Naive thymus-derived CD4-positive, alpha-beta T cell (primary cell): ENCODE measurements at regions of chr14 and their contacts with region 1.

Region 1: DNA sequence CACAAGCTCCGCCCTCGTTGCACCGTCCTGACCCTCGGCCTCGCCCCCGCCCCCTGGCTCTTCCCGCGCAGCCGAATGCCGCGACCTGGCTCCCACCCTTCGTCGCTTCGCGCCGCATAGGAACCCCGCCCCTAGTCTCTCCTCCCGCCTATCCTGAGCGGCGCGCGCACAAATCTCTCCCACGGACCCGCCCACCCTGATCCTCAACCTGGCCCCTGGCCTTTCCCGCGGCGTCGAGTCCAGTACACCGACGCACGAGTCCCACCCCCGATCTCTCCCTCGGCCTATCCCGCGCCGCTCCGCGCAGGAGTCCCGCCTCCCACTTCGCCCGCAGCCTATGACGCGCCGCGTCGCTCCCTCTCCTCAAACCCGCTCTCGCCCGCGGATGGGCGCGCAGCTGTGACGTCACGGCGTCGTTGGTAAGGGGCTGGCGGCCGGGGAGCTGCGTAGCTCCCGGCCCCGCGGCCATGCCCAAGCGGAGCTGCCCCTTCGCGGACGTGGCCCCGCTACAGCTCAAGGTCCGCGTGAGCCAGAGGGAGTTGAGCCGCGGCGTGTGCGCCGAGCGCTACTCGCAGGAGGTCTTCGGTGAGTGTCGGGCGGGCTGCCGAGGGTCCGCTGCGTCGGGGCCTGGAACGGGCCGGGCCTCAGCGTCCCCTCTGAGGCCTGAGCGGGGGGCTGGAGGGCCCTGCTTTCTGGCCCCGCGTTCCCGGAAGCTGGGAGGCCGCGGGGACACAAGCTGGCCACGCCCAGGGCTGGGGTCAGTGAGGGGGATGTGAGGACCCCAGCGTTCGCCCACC is at the start of gene SIVA1:
- DNase-seq: peak; percentile 98 to 100 (median 99)
- ATAC-seq: peak; percentile 94
- H3K4me3 ChIP-seq: peak within 1 kb of the TSS; percentile 95
- H3K4me3 Mint-ChIP-seq: peak within 1 kb of the TSS; percentile 88 to 97 (median 92)
- H3K27ac ChIP-seq: peak within 1 kb of the TSS; percentile 95
- H3K27ac Mint-ChIP-seq: peak within 1 kb of the TSS; percentile 78 to 94 (median 92)
- H3K4me1 ChIP-seq: peaks cover 14 to 29% of the 10 kb centered on the region in 2 donors
- H3K4me1 Mint-ChIP-seq: peaks cover 19 to 45% (median 36%) of the 10 kb centered on the region in 7 donors
- H3K27me3 ChIP-seq: no peaks in the 10 kb centered on the region
- H3K27me3 Mint-ChIP-seq: no peaks in the 10 kb centered on the region
- total RNA-seq, gene SIVA1: 61.4 to 97.7 (median 77.4) TPM

Region 2: DNA sequence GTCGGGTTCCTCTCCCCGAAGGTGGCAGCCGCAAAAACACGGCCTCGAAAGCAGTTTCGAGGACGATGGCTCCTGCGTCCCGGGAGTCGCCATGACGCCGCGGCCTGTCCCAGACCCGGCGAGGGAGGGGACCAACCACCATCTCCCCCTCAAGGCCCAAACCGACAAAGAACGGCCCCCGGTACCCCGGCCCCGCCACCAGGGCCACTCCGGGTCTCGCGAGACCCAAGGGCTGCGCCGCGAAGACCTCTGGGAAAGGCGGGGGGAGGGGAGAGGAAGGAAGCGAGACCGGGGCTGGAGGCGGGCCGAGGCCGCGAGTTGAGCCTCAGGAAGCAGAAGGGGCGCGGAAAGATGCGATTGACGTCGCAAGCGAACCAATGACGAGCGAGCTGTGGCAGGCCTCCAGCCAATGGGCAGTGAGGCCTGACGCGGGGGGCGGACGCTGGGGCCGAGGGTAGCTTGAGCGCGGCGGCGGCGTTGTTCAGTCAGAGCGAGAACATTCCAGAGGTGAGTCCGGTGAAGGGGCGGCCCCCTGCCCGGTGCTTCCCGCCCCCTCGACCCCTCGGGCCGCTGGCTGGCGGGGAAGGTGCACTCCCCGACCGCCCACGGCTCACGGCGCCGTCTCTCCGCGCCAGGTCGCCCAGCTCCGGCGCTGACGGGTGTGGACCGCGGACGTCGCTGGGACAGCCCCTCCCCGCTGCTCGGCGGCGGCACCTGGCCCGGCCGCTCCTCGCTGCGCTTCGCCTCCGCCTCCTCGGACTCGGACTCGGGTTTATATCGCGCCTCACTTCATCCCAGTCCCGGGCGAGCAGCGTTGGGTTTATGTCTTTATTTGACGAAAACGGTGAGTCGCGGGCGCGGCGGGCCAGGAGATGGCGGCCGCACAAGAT is 1418.9 kb before region 1 on chr14 and contains the start of gene EIF5:
- CTCF ChIA-PET with region 1: no interaction called
- POLR2A ChIA-PET with region 1: no interaction called
- intact Hi-C with region 1: loop called in 1 of 2 experiments (anchors 2 kb)
- DNase-seq: peak; percentile 92 to 99 (median 99)
- ATAC-seq: peak; percentile 91
- H3K4me3 ChIP-seq: peak within 1 kb of the TSS; percentile 81
- H3K4me3 Mint-ChIP-seq: peak within 1 kb of the TSS; percentile 92 to 97 (median 96)
- H3K27ac ChIP-seq: peak within 1 kb of the TSS; percentile 99
- H3K27ac Mint-ChIP-seq: peak within 1 kb of the TSS; percentile 94 to 99 (median 98)
- H3K4me1 ChIP-seq: peaks cover 22 to 29% of the 10 kb centered on the region in 2 donors
- H3K4me1 Mint-ChIP-seq: peaks cover 23 to 61% (median 50%) of the 10 kb centered on the region in 7 donors
- H3K27me3 ChIP-seq: no peaks in the 10 kb centered on the region
- H3K27me3 Mint-ChIP-seq: peaks cover 0 to 4% (median 0%) of the 10 kb centered on the region in 5 donors
- total RNA-seq, gene EIF5: 182 to 716 (median 322) TPM

Region 3: GRCh38 chr14:103724116-103724515 is 1028.8 kb before region 1 on chr14:
- CTCF ChIA-PET with region 1: no interaction called
- POLR2A ChIA-PET with region 1: no interaction called
- intact Hi-C with region 1: no loop called
- DNase-seq: no peak
- ATAC-seq: no peak
- H3K4me3 ChIP-seq: no peak overlapping the region
- H3K4me3 Mint-ChIP-seq: no peak overlapping the region
- H3K27ac ChIP-seq: no peak overlapping the region
- H3K27ac Mint-ChIP-seq: no peak overlapping the region
- H3K4me1 ChIP-seq: peaks cover 0 to 4% of the 10 kb centered on the region in 2 donors
- H3K4me1 Mint-ChIP-seq: peaks cover 10 to 22% (median 15%) of the 10 kb centered on the region in 7 donors
- H3K27me3 ChIP-seq: no peaks in the 10 kb centered on the region
- H3K27me3 Mint-ChIP-seq: no peaks in the 10 kb centered on the region

Region 4: GRCh38 chr14:104689109-104689880 is 63.6 kb before region 1 on chr14 and contains the start of gene INF2:
- CTCF ChIA-PET with region 1: no interaction called
- POLR2A ChIA-PET with region 1: interaction called, 4 read pairs
- intact Hi-C with region 1: loop called in 1 of 2 experiments (anchors 2 kb)
- DNase-seq: peak in 6 of 9 donors; percentile 36 to 64 (median 40)
- ATAC-seq: peak; percentile 79
- H3K4me3 ChIP-seq: peak within 1 kb of the TSS; percentile 70
- H3K4me3 Mint-ChIP-seq: peak within 1 kb of the TSS; percentile 58 to 91 (median 79)
- H3K27ac ChIP-seq: peak within 1 kb of the TSS; percentile 77
- H3K27ac Mint-ChIP-seq: peak within 1 kb of the TSS in 5 of 9 donors; percentile 8 to 90 (median 65)
- H3K4me1 ChIP-seq: peaks cover 10 to 62% of the 10 kb centered on the region in 2 donors
- H3K4me1 Mint-ChIP-seq: peaks cover 14 to 64% (median 48%) of the 10 kb centered on the region in 7 donors
- H3K27me3 ChIP-seq: no peaks in the 10 kb centered on the region
- H3K27me3 Mint-ChIP-seq: no peaks in the 10 kb centered on the region
- total RNA-seq, gene INF2: 65.0 to 140 (median 95.5) TPM

Region 5: DNA sequence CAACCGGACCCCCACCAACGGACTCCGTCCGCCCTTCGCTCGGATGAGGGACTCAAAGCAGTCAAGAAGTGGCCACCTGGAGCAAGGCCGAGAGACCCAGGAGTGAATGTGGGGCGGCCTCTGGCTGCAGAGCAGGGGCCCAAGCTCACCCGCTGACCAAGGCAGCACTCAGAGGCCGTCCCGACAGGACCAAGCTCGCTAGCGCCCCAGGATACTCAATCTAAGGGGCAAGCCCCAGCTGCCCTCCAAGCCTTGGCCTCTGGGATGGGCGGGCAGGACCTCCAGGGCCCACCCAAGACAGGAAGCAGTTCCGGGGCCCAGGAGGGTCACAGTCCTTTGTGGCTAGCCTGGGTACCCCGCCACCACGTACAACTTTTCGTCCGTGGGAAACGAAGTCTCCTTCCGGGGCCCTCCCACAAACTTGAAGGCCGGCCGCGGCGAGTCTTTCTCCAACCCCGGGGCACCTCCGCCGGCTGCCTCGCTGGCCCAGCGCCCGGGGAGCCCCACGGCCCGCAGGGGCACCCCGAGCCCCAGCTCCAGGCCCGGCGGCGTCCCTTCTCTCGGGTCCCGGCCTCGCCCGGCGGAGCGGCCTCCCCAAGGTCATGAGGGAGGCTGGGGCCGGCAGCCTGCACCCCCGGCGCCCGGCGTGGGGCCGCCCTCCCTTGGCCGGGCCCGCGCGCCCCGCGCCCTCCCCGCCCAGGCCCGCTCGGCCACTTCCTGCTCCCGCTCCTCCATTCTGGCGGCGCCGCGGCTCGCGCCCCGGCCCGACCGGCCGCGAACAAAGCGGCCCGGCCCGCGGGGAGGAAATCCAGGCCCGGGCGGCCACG is 41.9 kb after region 1 on chr14:
- CTCF ChIA-PET with region 1: no interaction called
- POLR2A ChIA-PET with region 1: interaction called, 11 read pairs
- intact Hi-C with region 1: loop called (anchors 1 kb)
- DNase-seq: peak in 1 of 9 donors; percentile 64
- ATAC-seq: peak; percentile 56
- H3K4me3 ChIP-seq: peak overlapping the region; percentile 62
- H3K4me3 Mint-ChIP-seq: peak overlapping the region; percentile 86 to 92 (median 90)
- H3K27ac ChIP-seq: peak overlapping the region; percentile 68
- H3K27ac Mint-ChIP-seq: peak overlapping the region; percentile 73 to 90 (median 78)
- H3K4me1 ChIP-seq: peaks cover 21 to 34% of the 10 kb centered on the region in 2 donors
- H3K4me1 Mint-ChIP-seq: peaks cover 22 to 57% (median 50%) of the 10 kb centered on the region in 7 donors
- H3K27me3 ChIP-seq: no peaks in the 10 kb centered on the region
- H3K27me3 Mint-ChIP-seq: peaks cover 0 to 2% (median 0%) of the 10 kb centered on the region in 5 donors

Region 6: DNA sequence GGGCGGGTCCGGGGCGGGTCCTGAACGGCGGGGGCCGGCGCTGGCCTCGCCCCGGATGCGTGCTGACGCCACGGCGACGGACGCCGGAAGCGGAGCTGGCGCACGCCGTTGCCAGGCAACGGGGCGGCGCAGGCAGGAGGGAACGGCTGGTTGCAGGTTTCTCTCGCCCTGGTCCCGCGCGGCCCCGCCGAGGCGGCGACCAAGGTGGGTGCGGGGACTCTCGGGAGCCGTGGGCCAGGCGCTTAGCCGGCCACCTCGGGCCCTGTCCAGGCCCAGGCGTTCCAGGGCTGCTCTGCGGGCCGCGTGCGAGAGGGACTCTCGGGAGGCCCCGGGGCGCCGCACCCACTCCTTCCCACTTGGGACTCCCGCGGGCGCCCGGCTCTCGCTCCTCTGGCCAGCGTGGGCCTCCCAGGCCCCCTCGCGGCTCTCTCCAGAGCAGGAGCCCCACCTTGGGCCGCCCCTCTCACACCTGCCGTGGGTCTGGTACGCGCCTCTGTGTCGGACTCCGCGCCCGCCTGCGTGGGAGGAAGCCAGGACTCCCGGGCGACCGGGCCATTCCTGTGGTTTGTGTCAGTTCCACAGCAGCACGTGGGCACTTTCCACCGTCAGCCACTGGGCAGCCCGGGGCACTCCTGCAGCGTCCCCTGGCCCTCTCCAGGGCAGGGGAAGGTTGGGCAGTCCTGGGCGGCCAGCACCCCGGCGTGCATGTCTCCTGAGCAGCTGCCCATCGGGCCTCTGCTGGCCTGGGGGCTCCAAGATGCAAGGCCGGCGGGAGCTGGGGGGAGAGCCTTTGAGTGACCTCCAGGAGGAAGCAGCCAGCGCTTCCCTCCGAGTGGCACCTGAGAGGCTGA is 233.0 kb after region 1 on chr14 and contains the start of gene CLBA1:
- CTCF ChIA-PET with region 1: no interaction called
- POLR2A ChIA-PET with region 1: no interaction called
- intact Hi-C with region 1: loop called in 1 of 2 experiments (anchors 1 kb)
- DNase-seq: peak; percentile 81 to 90 (median 89)
- ATAC-seq: peak; percentile 96
- H3K4me3 ChIP-seq: peak within 1 kb of the TSS; percentile 56
- H3K4me3 Mint-ChIP-seq: peak within 1 kb of the TSS; percentile 64 to 86 (median 76)
- H3K27ac ChIP-seq: peak within 1 kb of the TSS; percentile 72
- H3K27ac Mint-ChIP-seq: peak within 1 kb of the TSS in 8 of 9 donors; percentile 74 to 89 (median 86)
- H3K4me1 ChIP-seq: no peaks in the 10 kb centered on the region
- H3K4me1 Mint-ChIP-seq: peaks cover 0 to 9% (median 4%) of the 10 kb centered on the region in 7 donors
- H3K27me3 ChIP-seq: no peaks in the 10 kb centered on the region
- H3K27me3 Mint-ChIP-seq: peaks cover 0 to 5% (median 4%) of the 10 kb centered on the region in 5 donors
- total RNA-seq, gene CLBA1: 0.51 to 2.1 (median 1.3) TPM

Region 7: GRCh38 chr14:105187935-105188524 is 435.1 kb after region 1 on chr14:
- CTCF ChIA-PET with region 1: no interaction called
- POLR2A ChIA-PET with region 1: no interaction called
- intact Hi-C with region 1: loop called in 1 of 2 experiments (anchors 5 kb)
- DNase-seq: no peak
- ATAC-seq: no peak
- H3K4me3 ChIP-seq: no peak overlapping the region
- H3K4me3 Mint-ChIP-seq: no peak overlapping the region
- H3K27ac ChIP-seq: no peak overlapping the region
- H3K27ac Mint-ChIP-seq: peak overlapping the region in 1 of 9 donors; percentile 55
- H3K4me1 ChIP-seq: peaks cover 0 to 4% of the 10 kb centered on the region in 2 donors
- H3K4me1 Mint-ChIP-seq: peaks cover 0 to 8% (median under 1%) of the 10 kb centered on the region in 7 donors
- H3K27me3 ChIP-seq: no peaks in the 10 kb centered on the region
- H3K27me3 Mint-ChIP-seq: peaks cover 0 to 5% (median 2%) of the 10 kb centered on the region in 5 donors